Tibial artery (tissue), 4 donors: ENCODE measurements at regions of chr5 and their contacts with region 1.

Region 1: GRCh38 chr5:179858586-179859427 is at the start of gene MRNIP:
- DNase-seq: peak; percentile 98 to 99
- H3K4me3 ChIP-seq: peak within 1 kb of the TSS; percentile 88 to 93
- H3K27ac ChIP-seq: peak within 1 kb of the TSS; percentile 91 to 95
- H3K4me1 ChIP-seq: peaks cover 0 to 38% (median 17%) of the 10 kb centered on the region in 4 donors
- H3K27me3 ChIP-seq: no peaks in the 10 kb centered on the region
- CTCF ChIP-seq: no peak

Region 2: GRCh38 chr5:179697993-179698934 is 160.5 kb before region 1 on chr5:
- intact Hi-C with region 1: loop called (anchors 5 kb)
- DNase-seq: peak; percentile 99 to 100
- H3K4me3 ChIP-seq: peak overlapping the region; percentile 93 to 98
- H3K27ac ChIP-seq: peak overlapping the region; percentile 99 to 100
- H3K4me1 ChIP-seq: peaks cover 0 to 39% (median 19%) of the 10 kb centered on the region in 4 donors
- H3K27me3 ChIP-seq: no peaks in the 10 kb centered on the region
- CTCF ChIP-seq: no peak

Region 3: DNA sequence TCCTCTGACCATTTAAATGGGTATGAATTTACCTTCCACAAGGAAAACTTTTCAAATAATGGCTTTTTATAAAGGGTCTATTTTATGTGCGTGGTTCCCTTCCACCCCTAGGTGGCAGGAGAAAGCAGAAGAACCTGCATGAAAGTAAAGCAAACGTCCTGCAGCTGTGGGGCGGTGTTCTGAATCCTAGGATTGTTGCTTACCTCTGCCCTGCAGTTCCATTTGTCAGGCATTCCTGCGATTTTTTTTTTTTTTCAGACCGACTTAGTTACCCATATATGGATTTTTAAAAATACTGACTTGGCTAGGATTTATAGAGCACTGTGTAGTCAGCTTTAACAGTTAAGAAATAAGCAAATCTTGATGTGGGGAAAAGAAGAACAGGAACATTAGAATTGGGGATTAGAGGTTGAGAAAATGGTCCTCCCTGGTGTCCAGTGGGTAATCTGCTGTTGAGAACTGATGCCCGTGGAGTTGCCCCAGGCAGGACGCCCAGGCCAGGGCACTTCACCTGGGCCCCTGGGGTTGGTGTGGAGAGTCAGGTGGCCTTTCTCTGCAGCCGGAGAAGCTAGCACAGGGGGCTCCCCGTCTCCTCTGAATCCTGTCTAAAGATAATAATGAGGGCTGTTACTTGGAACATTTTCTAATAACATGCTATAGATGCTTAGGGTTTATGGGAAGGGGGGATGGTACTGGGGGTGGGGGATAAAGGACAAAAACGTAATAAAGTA is 95.4 kb before region 1 on chr5:
- intact Hi-C with region 1: loop called (anchors 5 kb)
- DNase-seq: peak; percentile 77 to 78
- H3K4me3 ChIP-seq: no peak overlapping the region
- H3K27ac ChIP-seq: peak overlapping the region; percentile 55 to 70
- H3K4me1 ChIP-seq: peaks cover 0 to 74% (median 55%) of the 10 kb centered on the region in 4 donors
- H3K27me3 ChIP-seq: no peaks in the 10 kb centered on the region
- CTCF ChIP-seq: peak; percentile 81 to 86

Region 4: GRCh38 chr5:179806250-179807222 is 52.3 kb before region 1 on chr5 and contains the start of gene MGAT4B:
- intact Hi-C with region 1: loop called (anchors 5 kb)
- DNase-seq: peak; percentile 71 to 89
- H3K4me3 ChIP-seq: peak within 1 kb of the TSS; percentile 86 to 99
- H3K27ac ChIP-seq: peak within 1 kb of the TSS; percentile 94 to 96
- H3K4me1 ChIP-seq: peaks cover 0 to 50% (median 43%) of the 10 kb centered on the region in 4 donors
- H3K27me3 ChIP-seq: no peaks in the 10 kb centered on the region
- CTCF ChIP-seq: no peak

Region 5: GRCh38 chr5:179821581-179822432 is 37.0 kb before region 1 on chr5:
- intact Hi-C with region 1: loop called (anchors 5 kb)
- DNase-seq: peak; percentile 98 to 99
- H3K4me3 ChIP-seq: peak overlapping the region; percentile 99 to 100
- H3K27ac ChIP-seq: peak overlapping the region; percentile 100
- H3K4me1 ChIP-seq: peaks cover 10 to 85% (median 71%) of the 10 kb centered on the region in 4 donors
- H3K27me3 ChIP-seq: no peaks in the 10 kb centered on the region
- CTCF ChIP-seq: no peak

Region 6: GRCh38 chr5:179893069-179893957 is 34.5 kb after region 1 on chr5:
- intact Hi-C with region 1: no loop called
- DNase-seq: no peak
- H3K4me3 ChIP-seq: no peak overlapping the region
- H3K27ac ChIP-seq: no peak overlapping the region
- H3K4me1 ChIP-seq: no peaks in the 10 kb centered on the region
- H3K27me3 ChIP-seq: no peaks in the 10 kb centered on the region
- CTCF ChIP-seq: no peak